Right cardiac atrium (tissue), 5 donors: ENCODE measurements at regions of chr2 and their contacts with region 1.

Region 1: GRCh38 chr2:164061129-164061746 is 325.4 kb upstream of the FIGN start:
- DNase-seq: peak in 1 of 3 donors; percentile 20
- ATAC-seq: no peak
- H3K4me3 ChIP-seq: no peak overlapping the region
- H3K27ac ChIP-seq: no peak overlapping the region
- H3K4me1 ChIP-seq: no peaks in the 10 kb centered on the region
- H3K27me3 ChIP-seq: no peaks in the 10 kb centered on the region

Region 2: GRCh38 chr2:163471947-163472346 is 589.3 kb before region 1 on chr2:
- intact Hi-C with region 1: loop called in 1 of 4 experiments (anchors 10 kb)
- DNase-seq: no peak
- ATAC-seq: peak; percentile 38 to 43
- H3K4me3 ChIP-seq: no peak overlapping the region
- H3K27ac ChIP-seq: no peak overlapping the region
- H3K4me1 ChIP-seq: peaks cover 2% of the 10 kb centered on the region
- H3K27me3 ChIP-seq: no peaks in the 10 kb centered on the region

Region 3: GRCh38 chr2:163878531-163879117 is 182.6 kb before region 1 on chr2:
- intact Hi-C with region 1: loop called in 1 of 4 experiments (anchors 5 kb)
- DNase-seq: peak in 2 of 3 donors; percentile 14 to 18
- ATAC-seq: no peak
- H3K4me3 ChIP-seq: no peak overlapping the region
- H3K27ac ChIP-seq: no peak overlapping the region
- H3K4me1 ChIP-seq: no peaks in the 10 kb centered on the region
- H3K27me3 ChIP-seq: no peaks in the 10 kb centered on the region

Region 4: DNA sequence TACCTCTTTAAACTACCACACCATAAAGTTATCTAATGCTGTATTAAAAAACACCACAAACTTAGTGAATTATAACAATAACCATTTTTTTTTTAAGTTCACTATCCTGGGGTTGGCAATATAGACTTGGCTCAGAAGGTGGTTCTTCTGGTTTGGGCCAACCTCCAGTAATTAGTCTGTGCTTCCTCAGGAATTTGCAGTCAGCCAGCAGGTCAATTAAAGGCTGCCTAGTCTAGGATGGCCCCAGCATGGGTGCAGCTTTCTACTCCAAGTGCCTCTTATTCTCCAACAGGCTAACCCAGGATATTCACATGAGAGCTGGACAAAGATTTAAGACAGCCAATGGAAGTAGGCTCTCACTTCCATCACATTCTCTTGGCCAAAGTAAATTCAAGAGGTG is 53.7 kb after region 1 on chr2:
- intact Hi-C with region 1: no loop called
- DNase-seq: no peak
- ATAC-seq: no peak
- H3K4me3 ChIP-seq: no peak overlapping the region
- H3K27ac ChIP-seq: no peak overlapping the region
- H3K4me1 ChIP-seq: no peaks in the 10 kb centered on the region
- H3K27me3 ChIP-seq: no peaks in the 10 kb centered on the region